GM13976 (cell line): ENCODE measurements at regions of chr1 and their contacts with region 1.

Region 1: GRCh38 chr1:19704247-19705113 is 39.8 kb downstream of the HTR6 start:
- DNase-seq: peak; percentile 77
- CTCF ChIP-seq: peak; percentile 89

Region 2: DNA sequence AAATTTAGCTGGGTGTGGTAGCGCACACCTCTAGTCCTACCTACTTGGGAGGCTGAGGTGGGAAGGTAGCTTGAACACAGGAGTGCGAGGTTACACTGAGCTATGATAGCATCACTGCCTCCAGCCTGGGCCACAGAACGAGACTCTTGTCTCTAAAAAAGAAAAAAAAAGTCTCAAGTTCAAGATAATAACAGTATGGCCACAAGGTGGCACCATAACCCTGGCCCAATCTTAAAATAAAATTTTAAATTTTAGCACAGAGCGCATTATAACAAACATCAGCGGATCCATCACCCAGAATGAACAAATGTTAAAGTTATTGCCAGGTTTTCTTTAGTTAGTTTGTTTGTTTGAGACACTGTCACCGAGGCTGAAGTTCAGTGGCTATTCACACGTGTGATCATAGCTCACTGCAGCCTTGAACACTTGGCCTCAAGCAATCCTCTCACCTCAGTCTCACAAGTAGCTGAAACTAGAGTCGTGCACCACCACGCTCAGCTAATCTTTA is 42.7 kb before region 1 on chr1:
- in situ Hi-C with region 1: loop called (anchors 5 kb)
- DNase-seq: no peak
- CTCF ChIP-seq: peak; percentile 45